Posterior vena cava (tissue), 2 donors: ENCODE measurements at regions of chr7 and their contacts with region 1.

Region 1: DNA sequence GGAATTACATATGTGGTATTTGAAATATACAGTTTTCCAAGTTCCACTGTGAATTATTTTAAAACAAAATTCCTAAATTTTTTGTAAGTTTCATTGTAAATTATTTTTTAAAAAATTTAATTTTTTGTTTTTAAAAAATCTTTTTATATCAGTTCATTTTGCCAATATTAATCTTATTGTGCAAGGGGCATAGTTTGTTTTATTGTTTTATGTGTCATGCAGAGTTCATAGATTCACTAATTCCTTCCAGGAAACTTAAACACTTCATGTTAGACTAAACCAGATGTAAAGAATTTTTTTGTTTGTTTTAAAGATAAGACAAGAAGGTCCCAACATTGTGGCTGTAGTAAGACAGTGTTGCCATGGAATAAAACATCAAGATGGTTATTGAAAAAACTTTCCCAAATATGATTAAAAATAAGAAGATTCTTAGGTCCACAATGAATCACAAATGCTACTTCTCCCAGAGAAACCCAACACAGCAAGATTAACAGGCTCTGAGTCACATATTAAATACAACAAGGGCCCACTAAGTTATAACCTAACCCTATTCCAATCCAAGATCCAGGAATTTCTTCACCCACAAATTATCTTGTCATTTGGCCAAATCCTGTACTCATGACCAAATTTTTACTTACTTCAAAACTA is 464.7 kb upstream of the IGFBP3 start:
- DNase-seq: no peak

Region 2: DNA sequence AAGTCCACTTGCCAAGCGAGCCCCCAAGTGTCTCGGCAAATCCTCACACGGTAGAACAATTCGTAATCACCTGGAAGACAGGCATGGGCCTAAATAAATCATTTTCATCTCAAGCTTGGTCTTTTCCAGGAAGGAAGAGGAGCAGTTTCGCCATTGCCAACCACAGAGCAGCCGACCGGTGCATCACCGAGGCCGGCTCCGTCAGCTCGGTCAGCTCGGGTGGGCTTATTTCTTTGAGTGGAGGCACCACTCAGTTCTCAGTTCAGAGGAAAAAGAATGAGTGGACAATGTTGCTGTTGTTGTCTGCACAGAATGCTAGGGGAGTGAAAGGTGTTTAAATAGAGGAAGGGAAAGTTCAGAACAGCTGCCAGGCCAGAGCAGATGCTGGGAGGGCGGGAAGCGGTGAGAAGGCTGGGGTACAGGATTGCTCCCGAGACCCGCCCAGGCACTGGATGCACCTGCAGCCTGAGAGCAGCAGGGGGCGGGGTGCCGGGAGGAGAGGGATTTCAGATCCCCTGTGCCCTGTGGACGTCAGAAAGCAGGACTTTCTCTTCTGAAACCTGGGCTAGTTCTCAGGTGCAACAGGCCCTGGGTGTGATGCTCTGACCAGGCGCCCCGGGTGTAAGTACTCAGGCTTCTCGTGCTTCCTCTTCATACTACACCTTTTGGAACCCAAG is 447.0 kb before region 1 on chr7:
- intact Hi-C with region 1: no loop called
- DNase-seq: no peak

Region 3: GRCh38 chr7:46197785-46198540 is 187.8 kb before region 1 on chr7:
- intact Hi-C with region 1: no loop called
- DNase-seq: no peak

Region 4: DNA sequence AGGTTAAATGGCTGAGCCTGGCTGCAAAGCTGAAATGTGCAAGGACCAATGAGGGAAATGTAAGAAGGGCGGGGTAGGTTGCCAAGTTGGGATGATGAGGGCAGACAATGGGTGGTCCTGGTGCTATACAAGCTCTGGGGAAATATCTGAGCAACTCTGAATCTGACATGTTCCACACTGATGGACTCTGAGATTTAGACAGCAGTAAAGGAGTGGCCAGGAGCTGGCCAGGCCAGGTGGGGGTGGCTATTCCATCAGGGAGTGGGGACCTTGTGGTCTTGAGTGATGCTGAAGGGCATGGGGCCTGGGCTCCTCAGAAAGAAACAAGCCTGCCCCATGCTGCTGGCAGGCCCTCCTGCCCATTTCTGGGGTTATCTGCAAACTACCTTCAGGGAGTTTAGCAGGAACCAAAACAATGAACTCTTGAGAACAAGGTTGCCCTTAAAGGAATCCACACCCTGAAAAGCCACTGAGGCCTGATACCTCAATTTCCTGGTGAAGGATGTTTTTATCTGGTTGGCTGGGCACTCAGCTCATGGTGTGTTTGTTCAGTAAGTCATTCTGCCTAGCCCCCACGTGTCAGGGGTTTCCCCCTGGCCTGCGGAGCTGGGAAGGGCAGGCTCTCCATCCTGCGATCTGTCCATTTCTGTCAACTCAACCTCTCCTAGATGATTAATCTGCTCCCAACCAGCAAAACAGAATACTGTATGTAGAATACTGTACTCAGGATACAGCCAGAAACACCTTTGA is 1339.4 kb after region 1 on chr7:
- intact Hi-C with region 1: loop called in 1 of 2 experiments (anchors 5 kb)
- DNase-seq: no peak